ENCODE measurements at regions of chr4 and their contacts with region 1.

Region 1: GRCh38 chr4:54440394-54441136 is 211.5 kb downstream of the PDGFRA start:
- DNase-seq: peak; percentile 18
- H3K4me3 ChIP-seq: no peak overlapping the region
- H3K27ac ChIP-seq: no peak overlapping the region
- H3K4me1 ChIP-seq: no peaks in the 10 kb centered on the region
- H3K27me3 ChIP-seq: no peaks in the 10 kb centered on the region
- CTCF ChIP-seq: peak; percentile 66 to 67

Region 2: DNA sequence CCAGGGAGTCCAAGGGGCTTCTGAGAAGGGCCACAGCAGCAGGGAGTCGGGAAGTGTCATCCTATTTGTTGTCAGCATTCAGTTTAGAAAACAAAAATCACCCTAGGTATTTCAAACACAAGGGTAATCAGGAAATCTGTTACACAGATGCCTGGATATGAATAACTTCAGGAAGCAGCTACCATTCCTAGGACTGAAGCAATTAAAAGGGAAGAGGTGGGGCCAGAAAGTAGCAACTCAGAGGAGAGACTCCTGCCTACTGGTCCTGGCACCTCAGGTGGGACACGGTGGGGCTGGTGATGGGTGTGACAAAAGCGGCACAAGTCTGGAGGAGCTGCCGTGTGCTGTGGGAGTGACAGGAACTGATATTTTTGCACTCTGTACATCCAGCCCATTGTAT is 103.6 kb before region 1 on chr4:
- CTCF ChIA-PET with region 1: no interaction called
- dilution Hi-C with region 1: loop called (anchors 5 kb)
- in situ Hi-C with region 1: no loop called
- intact Hi-C with region 1: no loop called
- DNase-seq: no peak
- H3K4me3 ChIP-seq: no peak overlapping the region
- H3K27ac ChIP-seq: no peak overlapping the region
- H3K4me1 ChIP-seq: no peaks in the 10 kb centered on the region
- H3K27me3 ChIP-seq: no peaks in the 10 kb centered on the region
- CTCF ChIP-seq: no peak

Region 3: GRCh38 chr4:54961357-54961975 is 520.9 kb after region 1 on chr4:
- CTCF ChIA-PET with region 1: no interaction called
- dilution Hi-C with region 1: no loop called
- in situ Hi-C with region 1: no loop called
- intact Hi-C with region 1: loop called (anchors 5 kb)
- DNase-seq: peak; percentile 14
- H3K4me3 ChIP-seq: no peak overlapping the region
- H3K27ac ChIP-seq: no peak overlapping the region
- H3K4me1 ChIP-seq: no peaks in the 10 kb centered on the region
- H3K27me3 ChIP-seq: peaks cover 2% of the 10 kb centered on the region
- CTCF ChIP-seq: peak; percentile 68 to 74